ENCODE measurements at regions of chr3 and their contacts with region 1.

Region 1: DNA sequence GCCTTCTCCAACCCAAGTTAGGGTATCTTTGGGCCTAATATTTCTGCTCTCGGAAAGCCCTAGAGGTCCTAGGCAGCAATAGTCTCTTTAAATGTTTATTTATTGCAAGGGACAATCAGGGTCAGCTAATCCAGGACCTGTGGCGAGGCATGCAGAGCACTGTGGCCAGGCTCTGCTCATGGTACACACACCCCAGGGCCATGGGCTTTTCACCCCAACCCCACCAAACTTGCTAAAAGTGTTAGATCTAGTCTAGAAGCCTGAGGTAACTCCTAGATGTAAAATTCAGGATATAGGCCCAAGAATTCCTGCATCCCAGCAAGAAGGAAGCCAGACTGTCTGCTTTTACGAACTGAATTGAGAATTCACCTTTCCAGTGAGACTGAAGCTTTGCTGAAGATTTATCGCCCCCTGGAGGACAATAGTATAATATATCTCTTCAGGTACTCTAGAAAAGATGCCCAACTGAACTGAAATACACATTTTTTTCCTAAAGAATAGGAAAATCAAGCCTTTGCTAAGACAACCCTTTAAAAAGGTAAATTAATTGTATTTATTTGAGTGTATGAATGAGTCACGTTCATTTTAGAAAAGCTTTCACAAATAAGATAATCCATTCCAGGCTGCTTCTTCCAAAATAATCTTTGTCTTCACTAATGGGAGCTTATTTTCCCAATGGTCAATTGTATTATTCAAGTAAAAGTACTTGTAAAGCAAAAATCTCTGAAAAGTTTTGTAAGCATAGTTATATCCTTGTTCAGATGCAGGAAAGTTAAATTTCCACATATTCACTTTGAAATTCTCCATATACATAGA is 89.8 kb downstream of the LRRC3B start:
- DNase-seq: no peak
- ATAC-seq: peak; percentile 84
- H3K4me3 ChIP-seq: no peak overlapping the region
- H3K27ac ChIP-seq: no peak overlapping the region
- H3K4me1 ChIP-seq: no peaks in the 10 kb centered on the region
- H3K27me3 ChIP-seq: no peaks in the 10 kb centered on the region
- CTCF ChIP-seq: peak; percentile 40 to 58 (median 58); a peak in 5 of 6 replicates
- EP300 ChIP-seq: no peak
- POLR2A ChIP-seq: no peak
- RAD21 ChIP-seq: peak; percentile 79

Region 2: DNA sequence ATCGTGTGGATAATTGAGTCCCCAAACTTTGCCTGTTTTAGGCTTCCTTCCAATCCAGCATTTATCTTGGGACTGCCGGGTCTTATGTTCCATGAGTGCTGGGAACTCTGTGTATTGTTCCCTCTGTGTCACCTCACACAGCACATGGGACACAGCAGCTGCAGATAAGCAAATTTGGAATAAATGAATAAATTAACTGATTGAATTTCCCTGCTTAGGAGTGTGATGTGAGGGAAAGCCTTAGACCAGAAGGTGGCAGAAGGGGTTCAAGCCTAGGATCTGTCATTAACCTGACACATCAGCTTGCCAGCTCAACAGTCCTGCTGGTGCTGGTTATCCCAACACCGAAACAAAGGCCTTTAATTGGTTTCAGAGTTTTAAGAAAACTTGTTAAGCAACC is 808.2 kb before region 1 on chr3:
- CTCF ChIA-PET with region 1: interaction called, 3 read pairs
- POLR2A ChIA-PET with region 1: no interaction called
- RAD21 ChIA-PET with region 1: interaction called, 3 read pairs
- SMC1A ChIA-PET with region 1: no interaction called
- in situ Hi-C with region 1: no loop called
- intact Hi-C with region 1: loop called (anchors 10 kb)
- DNase-seq: no peak
- ATAC-seq: peak; percentile 31; the same call in 1 of the 3 replicates
- H3K4me3 ChIP-seq: no peak overlapping the region
- H3K27ac ChIP-seq: no peak overlapping the region
- H3K4me1 ChIP-seq: no peaks in the 10 kb centered on the region
- H3K27me3 ChIP-seq: 0 out of 4 replicates have a peak, but pooled peaks cover 0 to 2% of the 10 kb centered on the region in 2 experiments
- CTCF ChIP-seq: peak in 1 of 3 experiments; percentile 6; a peak in 1 of 6 replicates
- EP300 ChIP-seq: no peak
- POLR2A ChIP-seq: no peak
- RAD21 ChIP-seq: peak; percentile 52

Region 3: GRCh38 chr3:26291840-26292239 is 420.6 kb before region 1 on chr3:
- CTCF ChIA-PET with region 1: no interaction called
- POLR2A ChIA-PET with region 1: no interaction called
- RAD21 ChIA-PET with region 1: no interaction called
- SMC1A ChIA-PET with region 1: no interaction called
- in situ Hi-C with region 1: no loop called
- intact Hi-C with region 1: no loop called
- DNase-seq: no peak
- ATAC-seq: no peak
- H3K4me3 ChIP-seq: no peak overlapping the region
- H3K27ac ChIP-seq: no peak overlapping the region
- H3K4me1 ChIP-seq: no peaks in the 10 kb centered on the region
- H3K27me3 ChIP-seq: no peaks in the 10 kb centered on the region
- CTCF ChIP-seq: no peak
- EP300 ChIP-seq: no peak
- POLR2A ChIP-seq: no peak
- RAD21 ChIP-seq: no peak

Measured in GM12878 (cell line).